CD4-positive, alpha-beta memory T cell (primary cell): ENCODE measurements at regions of chr15 and their contacts with region 1.

Region 1: DNA sequence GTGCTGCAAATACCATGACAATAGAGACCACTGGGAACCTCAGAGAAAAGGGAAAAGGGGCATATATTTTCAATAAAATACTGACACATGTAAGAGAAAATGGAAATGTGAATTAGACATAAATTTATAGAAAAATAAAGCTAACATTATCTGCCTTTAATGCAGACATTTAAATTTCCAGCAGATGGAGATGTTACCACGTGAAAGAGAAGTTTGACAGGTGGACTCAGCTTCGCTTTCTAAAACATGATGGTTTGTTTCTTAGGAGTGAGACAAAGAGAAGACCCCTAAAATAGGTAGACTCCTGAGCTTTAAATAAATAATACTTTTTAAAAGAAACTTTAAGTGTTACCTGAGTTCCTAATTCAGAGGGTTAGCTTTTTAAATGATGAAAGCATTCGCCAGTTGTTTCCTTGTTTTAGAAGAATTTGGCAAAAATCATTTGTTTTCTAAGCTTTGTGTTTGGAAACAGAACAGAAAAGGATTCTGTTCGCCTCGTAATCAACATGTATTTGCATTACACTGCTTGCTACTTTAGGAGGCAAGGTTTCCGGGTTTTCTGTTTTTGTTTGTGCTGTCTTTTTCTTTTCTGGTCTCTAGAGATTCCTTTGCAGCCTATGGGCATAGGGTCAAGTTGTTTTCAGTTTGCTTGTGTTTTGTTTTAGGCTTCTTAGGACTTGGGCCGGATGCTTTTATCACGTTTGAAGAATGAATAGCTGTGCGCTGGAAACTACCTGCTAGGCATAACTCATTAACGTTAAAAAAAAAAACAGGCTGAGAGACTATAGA is 271.4 kb downstream of the THSD4 start:
- DNase-seq: peak in 4 of 5 donors; percentile 14 to 27 (median 18)
- H3K4me3 ChIP-seq: no peak overlapping the region
- H3K4me3 Mint-ChIP-seq: peak overlapping the region in 2 of 8 donors; percentile 20 to 32
- H3K27ac ChIP-seq: no peak overlapping the region
- H3K27ac Mint-ChIP-seq: peak overlapping the region in 1 of 7 donors; percentile 5
- H3K4me1 ChIP-seq: no peaks in the 10 kb centered on the region
- H3K4me1 Mint-ChIP-seq: peaks cover 0 to 10% (median 7%) of the 10 kb centered on the region in 4 donors
- H3K27me3 ChIP-seq: peaks cover 3% of the 10 kb centered on the region
- H3K27me3 Mint-ChIP-seq: peaks cover 1 to 9% of the 10 kb centered on the region in 2 donors

Region 2: GRCh38 chr15:70348581-70349570 is 1037.8 kb before region 1 on chr15:
- CTCF ChIA-PET with region 1: no interaction called
- POLR2A ChIA-PET with region 1: no interaction called
- intact Hi-C with region 1: no loop called
- DNase-seq: no peak
- H3K4me3 ChIP-seq: no peak overlapping the region
- H3K4me3 Mint-ChIP-seq: no peak overlapping the region
- H3K27ac ChIP-seq: no peak overlapping the region
- H3K27ac Mint-ChIP-seq: no peak overlapping the region
- H3K4me1 ChIP-seq: no peaks in the 10 kb centered on the region
- H3K4me1 Mint-ChIP-seq: no peaks in the 10 kb centered on the region
- H3K27me3 ChIP-seq: no peaks in the 10 kb centered on the region
- H3K27me3 Mint-ChIP-seq: peaks cover 3 to 5% of the 10 kb centered on the region in 2 donors

Region 3: GRCh38 chr15:71189718-71190117 is 196.9 kb before region 1 on chr15:
- CTCF ChIA-PET with region 1: no interaction called
- POLR2A ChIA-PET with region 1: no interaction called
- intact Hi-C with region 1: no loop called
- DNase-seq: no peak
- H3K4me3 ChIP-seq: no peak overlapping the region
- H3K4me3 Mint-ChIP-seq: no peak overlapping the region
- H3K27ac ChIP-seq: no peak overlapping the region
- H3K27ac Mint-ChIP-seq: no peak overlapping the region
- H3K4me1 ChIP-seq: no peaks in the 10 kb centered on the region
- H3K4me1 Mint-ChIP-seq: no peaks in the 10 kb centered on the region
- H3K27me3 ChIP-seq: no peaks in the 10 kb centered on the region
- H3K27me3 Mint-ChIP-seq: peaks cover 4 to 7% of the 10 kb centered on the region in 2 donors

Region 4: GRCh38 chr15:71443538-71443937 is 56.9 kb after region 1 on chr15:
- CTCF ChIA-PET with region 1: interaction called, 50 read pairs
- POLR2A ChIA-PET with region 1: interaction called, 8 read pairs
- intact Hi-C with region 1: loop called (anchors 1 kb)
- DNase-seq: peak in 4 of 5 donors; percentile 4 to 17 (median 13)
- H3K4me3 ChIP-seq: no peak overlapping the region
- H3K4me3 Mint-ChIP-seq: no peak overlapping the region
- H3K27ac ChIP-seq: no peak overlapping the region
- H3K27ac Mint-ChIP-seq: no peak overlapping the region
- H3K4me1 ChIP-seq: no peaks in the 10 kb centered on the region
- H3K4me1 Mint-ChIP-seq: no peaks in the 10 kb centered on the region
- H3K27me3 ChIP-seq: no peaks in the 10 kb centered on the region
- H3K27me3 Mint-ChIP-seq: peaks cover 5 to 11% of the 10 kb centered on the region in 2 donors

Region 5: DNA sequence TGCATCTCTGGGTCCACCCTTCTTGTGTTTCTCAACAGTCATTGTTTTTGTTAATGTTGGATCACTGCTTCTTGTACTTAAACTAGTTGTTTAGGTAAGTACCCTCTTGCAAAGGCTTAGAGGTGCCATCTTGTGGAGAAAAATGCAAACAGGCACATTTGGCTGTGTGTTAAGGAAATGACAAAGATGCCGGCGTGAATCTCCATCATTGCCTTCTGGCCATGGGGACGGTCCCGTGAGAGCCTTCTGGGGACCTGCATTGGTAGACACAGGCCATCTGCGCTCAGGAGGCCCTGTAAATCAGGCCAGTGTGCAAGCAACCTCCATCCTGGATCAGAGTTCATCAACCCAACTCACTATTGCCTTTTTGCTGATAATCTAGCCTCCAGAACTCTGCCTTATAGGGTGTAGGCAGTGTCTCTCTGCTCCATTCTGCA is 265.1 kb after region 1 on chr15:
- CTCF ChIA-PET with region 1: no interaction called
- POLR2A ChIA-PET with region 1: no interaction called
- intact Hi-C with region 1: loop called (anchors 5 kb)
- DNase-seq: peak in 1 of 5 donors; percentile 0
- H3K4me3 ChIP-seq: no peak overlapping the region
- H3K4me3 Mint-ChIP-seq: peak overlapping the region in 1 of 8 donors; percentile 11
- H3K27ac ChIP-seq: no peak overlapping the region
- H3K27ac Mint-ChIP-seq: no peak overlapping the region
- H3K4me1 ChIP-seq: no peaks in the 10 kb centered on the region
- H3K4me1 Mint-ChIP-seq: no peaks in the 10 kb centered on the region
- H3K27me3 ChIP-seq: no peaks in the 10 kb centered on the region
- H3K27me3 Mint-ChIP-seq: peaks cover 0 to 6% of the 10 kb centered on the region in 2 donors

Region 6: GRCh38 chr15:71730277-71731144 is 343.9 kb after region 1 on chr15:
- CTCF ChIA-PET with region 1: interaction called, 31 read pairs
- POLR2A ChIA-PET with region 1: no interaction called
- intact Hi-C with region 1: no loop called
- DNase-seq: peak in 4 of 5 donors; percentile 9 to 28 (median 18)
- H3K4me3 ChIP-seq: no peak overlapping the region
- H3K4me3 Mint-ChIP-seq: no peak overlapping the region
- H3K27ac ChIP-seq: no peak overlapping the region
- H3K27ac Mint-ChIP-seq: no peak overlapping the region
- H3K4me1 ChIP-seq: no peaks in the 10 kb centered on the region
- H3K4me1 Mint-ChIP-seq: no peaks in the 10 kb centered on the region
- H3K27me3 ChIP-seq: no peaks in the 10 kb centered on the region
- H3K27me3 Mint-ChIP-seq: peaks cover 8% of the 10 kb centered on the region in 2 donors